Activated CD8-positive, alpha-beta T cell treated with anti-CD3 and anti-CD28 coated beads, Interleukin-2, amount 10 ng/mL, durations not matched to agents 7 days and 5 days (primary cell): ENCODE measurements at regions of chr6 and their contacts with region 1.

Region 1: DNA sequence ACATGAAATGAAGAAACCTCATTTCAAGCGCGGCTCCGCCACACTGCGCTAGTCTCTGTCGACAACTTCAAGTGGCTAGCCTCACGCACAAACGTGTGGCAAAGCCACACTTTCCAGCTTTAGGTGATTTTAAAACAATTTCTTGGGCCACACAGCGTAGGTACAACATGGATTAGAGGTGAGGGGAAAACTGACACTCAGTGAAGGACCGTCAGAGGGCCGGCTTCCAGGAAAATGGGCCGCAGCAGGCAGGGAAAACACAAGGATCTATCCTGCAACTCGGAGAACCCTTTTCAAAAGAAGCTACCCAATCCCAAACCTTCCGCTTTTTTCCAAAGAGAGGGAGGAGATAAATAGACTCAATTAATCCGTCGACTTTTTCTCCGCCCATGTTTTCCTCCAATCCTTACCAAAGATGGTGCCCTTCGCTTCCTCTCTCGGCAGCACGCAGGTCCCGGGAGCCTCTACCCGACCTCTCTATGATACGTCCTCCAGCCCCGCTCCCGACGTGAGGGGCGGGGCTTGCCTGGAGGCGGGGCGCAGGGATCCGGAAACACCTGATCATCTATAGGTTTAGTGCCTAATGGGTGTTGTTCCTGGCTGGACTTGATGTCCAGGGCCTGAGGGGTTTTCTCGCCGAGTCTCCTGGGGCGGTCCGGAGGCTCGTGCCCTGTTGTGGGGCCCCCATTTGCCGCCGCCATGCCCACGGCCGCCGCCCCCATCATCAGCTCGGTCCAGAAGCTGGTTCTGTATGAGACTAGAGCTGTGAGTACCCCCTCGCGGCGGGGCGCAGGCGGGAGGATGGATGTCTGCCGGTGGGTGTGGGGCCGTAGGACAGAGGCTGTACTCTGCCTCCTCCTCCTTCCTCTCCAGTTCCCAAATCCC is at the starts of genes AK9 and FIG4:
- DNase-seq: peak; percentile 92
- ATAC-seq: peak; percentile 97
- H3K4me3 Mint-ChIP-seq: peak within 1 kb of the TSS; percentile 90
- H3K27ac Mint-ChIP-seq: peak within 1 kb of the TSS; percentile 88
- H3K4me1 Mint-ChIP-seq: peaks cover 16% of the 10 kb centered on the region
- H3K27me3 Mint-ChIP-seq: no peaks in the 10 kb centered on the region
- total RNA-seq, gene AK9: 2.9 to 3.1 TPM
- total RNA-seq, gene FIG4: 9.5 to 10.8 TPM

Region 2: GRCh38 chr6:109705258-109705657 is 14.3 kb after region 1 on chr6:
- CTCF ChIA-PET with region 1: interaction called, 10 read pairs
- POLR2A ChIA-PET with region 1: no interaction called
- DNase-seq: peak; percentile 87
- ATAC-seq: peak; percentile 98
- H3K4me3 Mint-ChIP-seq: no peak overlapping the region
- H3K27ac Mint-ChIP-seq: no peak overlapping the region
- H3K4me1 Mint-ChIP-seq: peaks cover 9% of the 10 kb centered on the region
- H3K27me3 Mint-ChIP-seq: no peaks in the 10 kb centered on the region